ENCODE measurements at regions of chr16 and their contacts with region 1.

Region 1: GRCh38 chr16:81723098-81723723 is 55.9 kb upstream of the PLCG2 start:
- DNase-seq: no peak
- H3K4me3 ChIP-seq: no peak overlapping the region
- H3K27ac ChIP-seq: no peak overlapping the region
- H3K4me1 ChIP-seq: peaks cover 0 to 14% (median 3%) of the 10 kb centered on the region in 4 donors
- H3K27me3 ChIP-seq: no peaks in the 10 kb centered on the region
- CTCF ChIP-seq: peak; percentile 65 to 83 (median 67)
- EP300 ChIP-seq: no peak
- POLR2A ChIP-seq: no peak

Region 2: GRCh38 chr16:81366316-81366932 is 356.8 kb before region 1 on chr16:
- in situ Hi-C with region 1: loop called in 3 of 4 experiments (anchors 10 to 25 kb)
- intact Hi-C with region 1: no loop called
- DNase-seq: no peak
- H3K4me3 ChIP-seq: no peak overlapping the region
- H3K27ac ChIP-seq: no peak overlapping the region
- H3K4me1 ChIP-seq: no peaks in the 10 kb centered on the region
- H3K27me3 ChIP-seq: no peaks in the 10 kb centered on the region
- CTCF ChIP-seq: peak; percentile 55 to 78 (median 66)
- EP300 ChIP-seq: no peak
- POLR2A ChIP-seq: no peak

Region 3: DNA sequence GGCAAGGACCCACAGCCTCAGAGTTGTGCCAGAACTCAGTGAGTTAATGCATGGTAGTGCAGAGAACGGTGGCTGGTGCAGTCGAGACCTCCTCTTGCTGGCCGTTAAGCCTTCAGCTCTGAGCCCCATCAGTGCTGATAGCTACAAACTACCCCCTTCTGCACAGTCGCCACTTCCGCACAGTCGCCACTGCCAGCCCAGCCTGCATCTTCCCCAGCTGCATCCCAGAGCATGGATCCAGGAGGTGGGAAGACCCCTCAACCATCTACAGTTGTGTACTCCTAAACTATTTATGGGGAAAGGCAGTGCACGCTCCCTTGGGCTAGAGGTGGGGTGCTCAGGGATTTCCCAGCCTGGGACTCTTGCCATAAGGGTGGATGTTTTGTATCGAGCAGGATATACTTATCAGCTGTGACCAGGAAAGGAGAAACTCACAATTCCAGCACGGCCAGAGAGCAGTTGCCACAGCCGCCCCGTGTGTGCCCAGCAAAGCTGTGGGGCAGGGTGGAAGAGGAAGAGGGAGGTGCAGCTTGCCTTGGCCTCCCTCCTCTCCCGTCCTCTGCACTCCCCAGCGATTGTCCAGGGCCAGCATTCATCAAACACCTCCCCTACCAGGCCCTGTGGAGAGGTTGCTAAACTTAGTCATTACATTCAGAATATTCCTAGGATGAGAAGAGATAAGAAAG is 328.1 kb before region 1 on chr16:
- in situ Hi-C with region 1: loop called in 3 of 4 experiments (anchors 10 kb)
- intact Hi-C with region 1: loop called (anchors 5 kb)
- DNase-seq: no peak
- H3K4me3 ChIP-seq: no peak overlapping the region
- H3K27ac ChIP-seq: peak overlapping the region in 1 of 4 donors; percentile 12
- H3K4me1 ChIP-seq: no peaks in the 10 kb centered on the region
- H3K27me3 ChIP-seq: no peaks in the 10 kb centered on the region
- CTCF ChIP-seq: no peak
- EP300 ChIP-seq: no peak
- POLR2A ChIP-seq: no peak

Region 4: DNA sequence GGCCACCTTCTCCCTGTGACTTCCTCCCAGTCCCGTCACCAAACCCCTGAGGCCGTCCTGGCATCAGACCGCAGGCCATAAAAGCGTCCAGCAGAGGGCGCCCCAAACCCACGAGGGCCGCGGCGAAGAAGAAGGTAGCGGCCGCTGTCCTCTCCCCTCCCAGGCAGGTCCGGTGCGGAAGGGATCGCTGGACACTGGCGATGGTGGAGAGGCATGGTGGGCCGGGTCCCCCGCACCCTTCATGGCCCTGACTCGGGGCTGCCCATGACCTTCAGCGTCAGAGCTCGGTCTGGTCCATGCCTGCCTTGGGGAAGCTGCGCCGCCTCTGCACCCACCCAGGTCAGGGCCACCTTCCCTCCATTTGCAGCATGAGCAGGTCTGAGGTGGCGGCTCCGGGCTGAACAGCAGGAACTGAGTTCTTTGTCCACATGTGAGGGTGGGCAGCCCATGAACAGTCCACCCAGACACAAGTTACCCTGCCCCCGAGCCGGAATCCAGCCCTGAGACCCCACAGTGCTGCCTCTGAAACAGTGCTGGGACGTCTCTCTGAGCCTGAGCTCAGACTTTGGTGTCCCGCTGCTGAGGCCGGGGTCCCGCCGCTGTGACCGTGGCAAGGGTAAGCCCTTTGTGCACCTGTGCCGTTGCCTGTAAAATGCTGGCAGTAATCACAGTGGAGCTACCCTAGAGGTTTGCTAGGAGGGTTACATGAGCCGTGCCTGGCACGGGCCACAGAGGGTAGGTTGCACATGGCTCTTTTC is 319.4 kb before region 1 on chr16:
- in situ Hi-C with region 1: loop called in 3 of 4 experiments (anchors 10 kb)
- intact Hi-C with region 1: loop called (anchors 5 kb)
- DNase-seq: peak; percentile 91
- H3K4me3 ChIP-seq: peak overlapping the region in 2 of 4 donors; percentile 24 to 36
- H3K27ac ChIP-seq: no peak overlapping the region
- H3K4me1 ChIP-seq: peaks cover 3 to 9% (median 6%) of the 10 kb centered on the region in 4 donors
- H3K27me3 ChIP-seq: no peaks in the 10 kb centered on the region
- CTCF ChIP-seq: peak; percentile 92 to 97 (median 97)
- EP300 ChIP-seq: no peak
- POLR2A ChIP-seq: no peak

Region 5: DNA sequence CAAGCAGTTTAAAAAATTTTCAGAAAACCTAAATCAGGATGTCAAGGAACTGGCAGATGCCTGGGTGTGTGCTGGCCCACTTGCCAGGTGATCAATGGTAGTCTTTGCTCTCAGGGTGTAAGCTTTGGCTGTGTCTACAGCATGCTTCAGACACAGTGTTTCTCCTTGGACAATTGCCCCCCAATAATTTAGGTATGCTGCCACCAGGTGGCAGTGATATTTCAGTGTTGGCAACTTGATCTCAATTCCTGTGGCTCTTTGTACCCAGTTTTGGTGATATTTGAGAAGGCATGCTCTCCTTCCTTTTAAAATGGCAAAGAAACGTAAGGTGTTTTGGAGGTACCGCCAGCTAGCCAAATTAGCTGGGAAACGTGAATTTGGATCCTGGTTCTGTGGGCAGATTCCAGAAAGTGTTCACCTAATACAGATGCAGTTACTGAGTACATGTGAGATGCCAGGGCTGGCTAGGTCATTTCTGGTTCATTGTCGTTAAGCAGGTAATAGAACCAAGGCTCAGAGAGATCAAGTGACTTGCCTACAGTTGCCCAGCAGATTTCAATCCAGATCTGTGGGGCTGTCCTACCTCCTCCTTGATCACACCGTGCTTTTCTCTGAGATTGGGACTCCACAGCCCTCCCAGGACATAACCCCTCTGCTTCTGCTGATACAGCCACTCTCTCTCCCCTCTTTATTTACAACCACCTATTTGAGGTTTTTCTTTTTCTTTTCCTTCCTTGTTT is 99.7 kb before region 1 on chr16:
- in situ Hi-C with region 1: loop called in 1 of 4 experiments (anchors 10 kb)
- intact Hi-C with region 1: loop called (anchors 5 kb)
- DNase-seq: peak; percentile 55
- H3K4me3 ChIP-seq: no peak overlapping the region
- H3K27ac ChIP-seq: no peak overlapping the region
- H3K4me1 ChIP-seq: peaks cover 5 to 12% (median 10%) of the 10 kb centered on the region in 4 donors
- H3K27me3 ChIP-seq: no peaks in the 10 kb centered on the region
- CTCF ChIP-seq: peak; percentile 48 to 69 (median 50)
- EP300 ChIP-seq: no peak
- POLR2A ChIP-seq: no peak

Region 6: DNA sequence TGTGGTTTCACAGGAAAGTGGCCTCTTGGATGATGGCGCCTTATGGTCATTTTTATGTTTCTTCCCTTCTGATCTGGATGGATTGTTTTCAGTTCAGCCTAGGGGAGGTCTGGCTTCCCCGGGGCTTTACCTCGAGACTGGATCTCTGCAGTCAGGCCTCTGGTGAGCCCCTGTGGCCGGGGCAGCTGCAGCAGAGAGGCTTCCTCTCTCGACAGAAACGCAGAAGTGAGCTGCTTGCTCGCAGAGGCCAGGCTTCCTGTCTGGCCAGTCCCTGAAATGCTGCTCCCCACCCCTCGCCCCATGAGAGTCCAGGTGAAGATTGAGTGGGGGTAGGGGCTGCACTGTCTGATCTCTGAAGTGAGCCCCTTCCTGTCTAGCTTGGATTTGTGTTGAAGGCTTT is 99.9 kb after region 1 on chr16:
- in situ Hi-C with region 1: no loop called
- intact Hi-C with region 1: no loop called
- DNase-seq: peak; percentile 73
- H3K4me3 ChIP-seq: no peak overlapping the region
- H3K27ac ChIP-seq: peak overlapping the region; percentile 2 to 61 (median 55)
- H3K4me1 ChIP-seq: no peaks in the 10 kb centered on the region
- H3K27me3 ChIP-seq: no peaks in the 10 kb centered on the region
- CTCF ChIP-seq: no peak
- EP300 ChIP-seq: no peak
- POLR2A ChIP-seq: no peak